ENCODE measurements at regions of chr3 and their contacts with region 1.

Region 1: DNA sequence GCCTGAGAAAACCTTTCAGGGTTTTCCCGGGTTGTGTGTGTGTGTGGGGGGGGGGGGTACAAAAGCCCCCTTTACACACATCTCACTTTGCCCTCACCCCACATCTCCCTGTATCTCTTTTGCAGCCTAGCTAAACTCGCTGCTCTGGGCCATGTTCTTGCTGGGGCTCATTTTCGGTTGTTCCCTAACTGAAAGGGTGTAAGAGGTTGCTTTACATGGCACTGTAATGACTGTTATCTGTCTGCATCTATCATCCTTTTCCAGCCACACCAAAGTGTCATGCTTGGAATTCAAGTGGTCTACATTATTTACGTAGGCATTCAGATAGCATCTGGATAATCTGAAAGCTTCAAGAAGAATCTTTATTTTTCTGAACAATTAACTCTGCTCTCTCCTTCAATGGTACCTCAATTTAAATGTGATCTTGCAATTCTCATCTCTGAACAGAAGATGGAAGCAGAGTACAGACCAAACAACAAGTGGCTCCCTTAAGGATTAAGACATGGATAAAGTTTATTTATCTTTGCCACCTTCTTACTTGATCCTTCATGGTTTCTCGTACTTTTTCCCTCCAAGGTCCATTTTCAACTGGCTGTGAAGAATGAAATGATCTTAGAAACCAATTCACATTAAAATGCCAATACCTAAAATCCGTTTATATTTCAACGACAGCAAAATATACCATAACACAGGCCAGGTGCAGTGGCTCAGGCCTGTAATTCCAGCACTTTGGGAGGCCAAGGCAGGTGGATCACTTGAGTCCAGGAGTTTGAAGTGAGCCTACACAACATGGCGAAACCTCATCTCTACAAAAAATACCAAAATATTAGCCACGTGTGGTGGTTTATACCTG is 34.9 kb downstream of the DCLK3 start:
- DNase-seq: no peak
- ATAC-seq: peak in 2 of 4 donors; percentile 61 to 80
- H3K4me3 ChIP-seq: no peak overlapping the region
- H3K27ac ChIP-seq: no peak overlapping the region
- H3K4me1 ChIP-seq: peaks cover 0 to 19% (median 7%) of the 10 kb centered on the region in 12 donors
- H3K27me3 ChIP-seq: no peaks in the 10 kb centered on the region
- CTCF ChIP-seq: peak; percentile 61 to 86 (median 79)
- POLR2A ChIP-seq: no peak

Region 2: DNA sequence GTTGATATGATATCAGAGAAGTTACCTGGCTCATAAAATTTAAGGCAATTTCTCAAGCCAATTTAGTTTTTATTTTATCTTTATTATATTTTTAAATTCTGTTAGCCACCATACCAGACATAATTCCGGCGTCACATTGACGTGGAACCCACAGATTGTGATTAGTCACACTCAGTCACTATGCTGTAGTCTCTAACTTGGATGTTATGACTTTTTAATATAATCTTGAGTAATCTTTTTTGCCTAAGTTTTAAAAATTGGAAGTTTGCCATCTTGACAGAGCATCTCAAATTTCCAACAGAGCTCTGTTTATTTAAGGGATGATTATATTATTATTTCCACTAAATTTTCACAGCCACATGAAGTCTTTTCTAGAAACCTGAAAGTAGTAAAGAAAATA is 44.6 kb after region 1 on chr3:
- intact Hi-C with region 1: no loop called
- DNase-seq: no peak
- ATAC-seq: peak in 1 of 4 donors; percentile 60
- H3K4me3 ChIP-seq: no peak overlapping the region
- H3K27ac ChIP-seq: no peak overlapping the region
- H3K4me1 ChIP-seq: peaks cover 0 to 12% (median 0%) of the 10 kb centered on the region in 12 donors
- H3K27me3 ChIP-seq: no peaks in the 10 kb centered on the region
- CTCF ChIP-seq: no peak
- POLR2A ChIP-seq: no peak

Region 3: DNA sequence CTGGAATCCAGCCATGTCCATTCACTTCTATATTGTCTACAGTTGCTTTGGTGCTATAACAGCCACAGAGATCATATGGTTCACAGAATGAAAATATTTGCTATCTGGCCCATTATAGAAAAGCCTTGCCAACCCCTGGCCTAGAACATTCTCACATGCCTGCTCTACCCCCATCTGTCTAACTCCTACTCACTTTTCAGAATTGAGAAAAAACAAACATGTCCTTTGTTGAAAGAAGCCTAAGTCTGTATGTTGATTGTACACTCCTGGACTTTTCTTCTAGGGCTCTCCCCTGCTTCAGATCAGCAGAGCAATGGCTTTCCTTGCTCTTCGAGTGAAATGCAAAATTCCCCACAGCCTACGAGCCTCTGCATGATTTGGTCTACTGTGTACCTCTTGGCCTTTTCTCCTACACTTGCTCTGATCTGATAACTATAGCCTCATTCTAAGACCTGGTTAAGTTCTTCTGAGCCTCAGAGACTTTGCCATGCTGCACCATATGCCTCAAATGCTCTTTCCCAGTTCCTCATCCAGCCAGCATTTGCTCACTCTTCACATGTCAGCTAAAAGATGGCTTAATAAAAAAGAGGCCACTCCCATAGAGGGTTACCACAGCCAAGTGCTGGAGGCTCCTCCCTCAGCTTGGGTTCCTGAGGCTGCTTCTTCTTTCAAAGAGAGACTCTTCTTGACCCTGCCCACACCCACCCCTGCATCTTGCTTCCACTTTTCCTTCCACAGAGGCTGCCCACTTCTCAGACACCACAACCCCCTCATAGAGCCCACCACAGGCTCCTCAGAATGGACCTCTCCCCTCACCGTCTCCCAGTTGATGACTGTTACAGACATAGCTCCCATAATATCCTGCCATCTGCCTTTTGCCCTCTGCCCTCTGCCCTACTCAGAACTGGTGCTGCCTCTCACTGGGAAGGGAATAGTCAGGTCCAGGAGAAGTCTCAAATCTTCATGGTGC is 57.8 kb after region 1 on chr3:
- intact Hi-C with region 1: loop called in 1 of 10 experiments (anchors 10 kb)
- DNase-seq: peak in 2 of 5 donors; percentile 26 to 29
- ATAC-seq: peak in 3 of 4 donors; percentile 30 to 80 (median 37)
- H3K4me3 ChIP-seq: no peak overlapping the region
- H3K27ac ChIP-seq: peak overlapping the region in 1 of 12 donors; percentile 35
- H3K4me1 ChIP-seq: peaks cover 0 to 12% (median 5%) of the 10 kb centered on the region in 12 donors
- H3K27me3 ChIP-seq: no peaks in the 10 kb centered on the region
- CTCF ChIP-seq: no peak
- POLR2A ChIP-seq: no peak

Region 4: GRCh38 chr3:36868614-36869436 is 139.4 kb after region 1 on chr3:
- intact Hi-C with region 1: loop called (anchors 1 to 2 kb)
- DNase-seq: peak in 2 of 5 donors; percentile 38 to 60
- ATAC-seq: peak in 3 of 4 donors; percentile 69 to 87 (median 79)
- H3K4me3 ChIP-seq: no peak overlapping the region
- H3K27ac ChIP-seq: no peak overlapping the region
- H3K4me1 ChIP-seq: peaks cover 0 to 14% (median 0%) of the 10 kb centered on the region in 12 donors
- H3K27me3 ChIP-seq: no peaks in the 10 kb centered on the region
- CTCF ChIP-seq: peak; percentile 69 to 94 (median 78)
- POLR2A ChIP-seq: no peak

Measured in heart left ventricle (tissue), 16 donors.